ENCODE measurements at regions of chr10 and their contacts with region 1.

Region 1: DNA sequence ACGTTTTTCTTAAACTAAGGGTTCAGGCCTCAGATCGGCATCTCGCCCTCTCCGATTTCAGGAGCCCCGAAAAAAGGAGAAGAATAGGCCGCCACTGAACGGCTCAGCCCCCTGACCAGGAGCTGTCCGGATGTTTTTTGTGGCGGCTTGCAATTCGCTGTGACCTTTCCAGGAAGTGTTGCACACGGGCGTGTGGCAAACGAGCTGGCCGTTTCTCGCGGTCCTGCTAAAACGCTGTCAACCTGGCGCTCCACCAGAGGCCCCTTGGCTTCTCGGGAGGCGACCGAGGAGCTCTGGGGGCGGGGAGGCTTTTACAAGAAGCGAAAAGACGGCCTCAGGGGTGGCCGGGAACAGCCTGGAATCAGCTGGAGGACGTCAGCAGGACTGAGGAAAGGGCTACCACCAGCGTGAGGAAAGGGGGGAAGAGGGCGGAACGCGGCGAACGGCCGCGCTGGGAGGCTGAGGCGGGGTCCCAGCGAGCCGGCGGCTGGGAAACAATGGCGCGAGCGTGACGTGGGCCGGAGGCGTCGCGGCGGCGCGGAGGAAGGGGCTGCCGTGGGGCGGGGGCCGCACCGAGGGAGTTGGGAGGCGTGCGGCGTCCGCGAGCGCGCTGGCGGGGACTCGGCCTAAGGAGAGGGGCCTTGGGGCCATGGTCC is 493 bp downstream of the NT5C2 start:
- DNase-seq: peak; percentile 91
- H3K4me3 ChIP-seq: peak overlapping the region; percentile 91
- H3K27ac ChIP-seq: peak overlapping the region; percentile 77
- H3K4me1 ChIP-seq: peaks cover 43% of the 10 kb centered on the region
- CTCF ChIP-seq: no peak

Region 2: GRCh38 chr10:103175580-103176285 is 16.8 kb before region 1 on chr10:
- CTCF ChIA-PET with region 1: interaction called, 9 read pairs
- POLR2A ChIA-PET with region 1: interaction called, 30 read pairs
- intact Hi-C with region 1: no loop called
- DNase-seq: no peak
- H3K4me3 ChIP-seq: no peak overlapping the region
- H3K27ac ChIP-seq: no peak overlapping the region
- H3K4me1 ChIP-seq: peaks cover 51% of the 10 kb centered on the region
- CTCF ChIP-seq: no peak

Region 3: GRCh38 chr10:103181244-103181643 is 11.3 kb before region 1 on chr10:
- CTCF ChIA-PET with region 1: interaction called, 9 read pairs
- POLR2A ChIA-PET with region 1: interaction called, 30 read pairs
- intact Hi-C with region 1: loop called (anchors 1 kb)
- DNase-seq: peak; percentile 96
- H3K4me3 ChIP-seq: peak overlapping the region; percentile 59
- H3K27ac ChIP-seq: peak overlapping the region; percentile 99
- H3K4me1 ChIP-seq: peaks cover 98% of the 10 kb centered on the region
- CTCF ChIP-seq: no peak

Measured in OCI-LY7 (cell line).